Activated CD8-positive, alpha-beta memory T cell treated with anti-CD3 and anti-CD28 coated beads, Interleukin-2, amount 10 ng/mL, durations not matched to agents 7 days and 5 days (primary cell): ENCODE measurements at regions of chr4 and their contacts with region 1.

Region 1: GRCh38 chr4:186201535-186202230 is 10.3 kb downstream of the CYP4V2 start:
- DNase-seq: peak; percentile 66
- ATAC-seq: peak; percentile 90
- H3K4me3 Mint-ChIP-seq: no peak overlapping the region
- H3K27ac Mint-ChIP-seq: no peak overlapping the region
- H3K4me1 Mint-ChIP-seq: peaks cover 4% of the 10 kb centered on the region
- H3K27me3 Mint-ChIP-seq: no peaks in the 10 kb centered on the region

Region 2: GRCh38 chr4:186191200-186192065 is 10.2 kb before region 1 on chr4 and contains the start of gene CYP4V2:
- CTCF ChIA-PET with region 1: interaction called, 15 read pairs
- DNase-seq: peak; percentile 91
- ATAC-seq: peak; percentile 93
- H3K4me3 Mint-ChIP-seq: peak within 1 kb of the TSS; percentile 90
- H3K27ac Mint-ChIP-seq: peak within 1 kb of the TSS; percentile 91
- H3K4me1 Mint-ChIP-seq: peaks cover 24% of the 10 kb centered on the region
- H3K27me3 Mint-ChIP-seq: no peaks in the 10 kb centered on the region
- total RNA-seq, gene CYP4V2: 10.3 to 14.6 TPM